Heart right ventricle (tissue), 16 donors: ENCODE measurements at regions of chrX and their contacts with region 1.

Region 1: GRCh38 chrX:48574270-48575266 is at the start of gene RBM3:
- DNase-seq: peak; percentile 91 to 94
- ATAC-seq: peak; percentile 95 to 99 (median 98)
- H3K4me3 ChIP-seq: peak within 1 kb of the TSS; percentile 56 to 87 (median 78)
- H3K27ac ChIP-seq: peak within 1 kb of the TSS; percentile 91 to 100 (median 99)
- H3K4me1 ChIP-seq: peaks cover 8 to 24% (median 14%) of the 10 kb centered on the region in 9 donors
- H3K27me3 ChIP-seq: no peaks in the 10 kb centered on the region
- CTCF ChIP-seq: peak; percentile 11 to 63 (median 46)
- total RNA-seq, gene RBM3: 60.0 to 204 (median 111) TPM

Region 2: DNA sequence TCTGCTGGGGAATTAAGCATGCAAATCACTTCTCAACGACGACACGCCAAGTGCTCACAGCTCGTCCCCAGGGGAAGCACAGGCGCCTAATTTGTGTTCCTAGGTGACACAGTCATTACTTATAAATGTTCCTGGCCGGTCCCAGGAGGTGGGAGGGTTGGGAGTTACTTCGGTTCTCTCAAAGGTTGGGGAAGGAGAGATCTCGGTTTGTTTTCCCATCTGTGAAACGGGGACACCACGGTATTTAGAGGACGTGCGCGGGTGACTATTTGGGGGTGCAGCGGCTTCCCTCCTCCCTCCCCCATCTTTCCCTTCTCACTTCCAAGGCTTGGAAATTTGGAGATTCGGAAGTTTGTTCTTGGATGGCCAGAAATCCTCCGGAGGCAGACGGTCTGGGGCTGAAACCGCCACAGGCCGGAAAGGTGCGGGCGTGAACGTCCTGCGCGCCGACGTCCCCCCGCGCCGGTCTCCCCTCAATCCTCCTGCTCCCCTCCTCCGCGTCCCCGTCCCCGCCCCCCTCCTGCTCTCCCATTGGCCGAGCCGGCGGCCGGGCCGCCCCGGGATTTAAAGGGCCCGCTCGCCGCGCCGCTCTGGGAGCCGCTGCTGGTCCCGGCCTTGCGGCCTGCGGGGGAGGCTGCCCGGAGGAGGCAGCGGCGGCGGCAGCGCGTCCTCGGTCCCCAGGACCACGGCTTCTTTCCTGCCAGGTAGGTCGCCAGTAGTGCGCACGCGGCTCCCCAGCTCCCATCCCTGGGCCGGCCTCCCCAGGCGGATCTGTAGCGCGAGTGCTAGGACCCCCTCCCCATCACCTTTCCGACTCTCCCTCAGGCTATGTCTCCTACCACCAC is 65.9 kb before region 1 on chrX and contains the start of gene PORCN:
- intact Hi-C with region 1: loop called in 1 of 10 experiments (anchors 10 kb)
- DNase-seq: peak; percentile 86 to 87
- ATAC-seq: peak; percentile 93 to 98 (median 96)
- H3K4me3 ChIP-seq: peak within 1 kb of the TSS; percentile 32 to 90 (median 72)
- H3K27ac ChIP-seq: peak within 1 kb of the TSS; percentile 50 to 87 (median 80)
- H3K4me1 ChIP-seq: peaks cover 0 to 10% (median 5%) of the 10 kb centered on the region in 9 donors
- H3K27me3 ChIP-seq: no peaks in the 10 kb centered on the region
- CTCF ChIP-seq: no peak
- total RNA-seq, gene PORCN: 9.9 to 16.1 (median 13.0) TPM

Region 3: DNA sequence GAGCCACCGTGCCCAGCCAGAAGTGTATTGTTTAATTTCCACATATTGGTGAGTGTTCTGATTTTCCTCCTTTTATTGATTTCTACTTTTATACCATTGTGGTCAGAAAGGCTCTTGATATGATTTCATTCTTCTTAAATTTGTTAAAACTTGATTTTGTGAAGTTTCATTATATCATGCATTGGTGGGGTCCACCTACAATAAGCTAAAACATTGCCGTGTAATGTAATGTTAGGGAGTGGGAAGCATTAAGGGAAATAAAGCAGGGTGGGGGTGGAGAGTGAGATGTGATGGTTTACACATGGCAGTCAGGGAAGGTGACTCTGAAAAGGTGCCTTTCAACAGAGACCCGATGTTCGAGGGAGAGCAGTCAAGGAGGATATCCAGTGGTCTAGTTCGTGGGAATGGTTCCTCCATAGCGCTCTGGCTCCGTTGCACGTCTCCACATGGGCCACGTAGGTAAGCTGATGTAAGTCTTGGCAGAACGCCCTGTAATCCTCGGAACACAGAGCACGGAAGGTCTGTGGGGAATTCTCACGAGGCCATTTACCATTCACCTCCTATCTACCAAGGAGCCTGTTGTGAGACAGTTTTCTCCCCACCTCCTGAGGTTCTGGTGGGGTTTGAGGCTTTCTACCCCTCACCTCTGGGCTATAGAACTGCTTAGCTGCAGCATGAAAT is 15.1 kb after region 1 on chrX:
- intact Hi-C with region 1: loop called in 2 of 10 experiments (anchors 2 kb)
- DNase-seq: no peak
- ATAC-seq: peak in 6 of 8 donors; percentile 17 to 68 (median 55)
- H3K4me3 ChIP-seq: no peak overlapping the region
- H3K27ac ChIP-seq: peak overlapping the region in 9 of 10 donors; percentile 66 to 82 (median 77)
- H3K4me1 ChIP-seq: peaks cover 0 to 26% (median 8%) of the 10 kb centered on the region in 9 donors
- H3K27me3 ChIP-seq: peaks cover 0 to 5% (median 0%) of the 10 kb centered on the region in 7 donors
- CTCF ChIP-seq: no peak

Region 4: DNA sequence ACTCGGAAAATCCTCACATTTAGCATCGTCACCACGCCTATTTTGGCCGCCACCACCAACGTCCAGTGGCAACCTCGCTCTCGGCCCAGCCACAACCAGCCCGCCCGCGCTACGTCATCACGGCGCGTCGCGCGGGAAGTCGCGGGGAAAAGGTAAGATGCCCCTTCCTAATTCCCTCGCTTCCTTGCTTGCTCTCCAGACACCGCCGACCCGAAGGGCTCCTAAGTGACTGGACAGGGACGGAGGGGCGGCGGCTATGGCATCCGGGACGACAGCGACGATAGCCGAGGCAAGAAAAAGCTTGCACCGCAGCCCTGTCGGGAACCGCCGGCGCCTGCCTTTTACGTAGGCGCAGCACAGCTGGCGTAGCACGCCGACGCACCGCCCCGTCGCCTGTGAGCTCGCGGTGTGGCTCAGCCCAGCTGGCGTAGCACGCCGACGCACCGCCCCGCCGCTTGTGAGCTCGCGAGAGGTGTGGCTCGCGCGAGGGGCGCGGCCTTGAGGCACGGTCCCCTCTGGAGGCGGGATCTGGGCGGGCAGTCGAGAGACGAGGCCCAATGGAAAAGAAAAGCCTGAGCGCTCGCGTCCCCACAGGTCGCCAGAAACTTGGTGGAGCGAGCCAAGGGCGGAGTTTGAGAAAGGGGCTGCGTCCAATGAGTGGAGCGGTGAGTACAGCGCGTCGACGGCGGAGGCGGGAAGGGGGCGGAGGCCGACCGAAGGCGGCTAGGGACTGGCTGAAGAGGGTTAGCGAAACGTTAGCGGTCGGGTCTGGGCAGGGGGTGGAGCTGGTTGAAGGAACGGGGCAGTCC is 226.9 kb after region 1 on chrX and contains the start of gene HDAC6:
- intact Hi-C with region 1: no loop called
- DNase-seq: peak; percentile 95 to 96
- ATAC-seq: peak; percentile 94 to 98 (median 96)
- H3K4me3 ChIP-seq: peak within 1 kb of the TSS; percentile 35 to 82 (median 65)
- H3K27ac ChIP-seq: peak within 1 kb of the TSS; percentile 84 to 97 (median 94)
- H3K4me1 ChIP-seq: peaks cover 0 to 16% (median 0%) of the 10 kb centered on the region in 9 donors
- H3K27me3 ChIP-seq: no peaks in the 10 kb centered on the region
- CTCF ChIP-seq: peak in 1 of 9 donors; percentile 5
- total RNA-seq, gene HDAC6: 28.4 to 45.6 (median 32.3) TPM